Psoas muscle (tissue), 8 donors: ENCODE measurements at regions of chr22 and their contacts with region 1.

Region 1: GRCh38 chr22:26461188-26461810 is 22.3 kb downstream of the HPS4 start:
- DNase-seq: peak; percentile 63 to 75
- ATAC-seq: peak; percentile 59 to 80 (median 74)
- H3K4me3 ChIP-seq: no peak overlapping the region
- H3K27ac ChIP-seq: no peak overlapping the region
- H3K4me1 ChIP-seq: no peaks in the 10 kb centered on the region
- H3K27me3 ChIP-seq: no peaks in the 10 kb centered on the region
- CTCF ChIP-seq: peak; percentile 71

Region 2: GRCh38 chr22:26364066-26365015 is 97.0 kb before region 1 on chr22:
- intact Hi-C with region 1: loop called (anchors 2 to 5 kb)
- DNase-seq: peak; percentile 26 to 62
- ATAC-seq: peak; percentile 71 to 83 (median 78)
- H3K4me3 ChIP-seq: no peak overlapping the region
- H3K27ac ChIP-seq: no peak overlapping the region
- H3K4me1 ChIP-seq: peaks cover 8% of the 10 kb centered on the region
- H3K27me3 ChIP-seq: peaks cover 0 to 4% (median 0%) of the 10 kb centered on the region in 3 donors
- CTCF ChIP-seq: peak; percentile 69

Region 3: DNA sequence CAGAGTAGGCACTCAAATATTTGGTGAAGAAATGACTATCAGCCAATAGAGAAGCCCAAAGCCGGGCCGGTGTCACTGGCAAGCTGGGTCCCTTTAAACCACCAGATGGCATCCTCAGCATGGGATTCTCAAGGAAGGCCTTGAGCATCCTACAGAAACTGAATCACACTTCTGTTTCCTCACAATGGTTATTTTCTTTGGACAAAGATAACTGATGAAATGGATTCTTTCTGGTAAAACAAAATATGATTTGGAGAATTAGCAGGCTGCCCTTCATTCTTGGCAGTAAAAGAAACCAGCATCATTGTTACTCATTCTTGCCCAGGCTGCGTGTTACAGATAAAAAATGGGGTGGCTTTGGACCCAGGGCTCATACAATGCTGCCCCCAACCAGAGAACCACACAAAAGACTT is 62.6 kb before region 1 on chr22:
- intact Hi-C with region 1: loop called in 1 of 2 experiments (anchors 2 kb)
- DNase-seq: peak; percentile 48 to 57
- ATAC-seq: peak; percentile 70 to 82 (median 78)
- H3K4me3 ChIP-seq: no peak overlapping the region
- H3K27ac ChIP-seq: no peak overlapping the region
- H3K4me1 ChIP-seq: no peaks in the 10 kb centered on the region
- H3K27me3 ChIP-seq: peaks cover 0 to 5% (median 0%) of the 10 kb centered on the region in 3 donors
- CTCF ChIP-seq: peak; percentile 62